ENCODE measurements at regions of chr7 and their contacts with region 1.

Region 1: GRCh38 chr7:1767524-1767923 is 97.4 kb downstream of the ELFN1 start:
- DNase-seq: no peak
- ATAC-seq: peak in 4 of 8 donors; percentile 28 to 41 (median 36)
- H3K4me3 ChIP-seq: no peak overlapping the region
- H3K27ac ChIP-seq: no peak overlapping the region
- H3K4me1 ChIP-seq: no peaks in the 10 kb centered on the region
- H3K27me3 ChIP-seq: peaks cover 0 to 2% (median 0%) of the 10 kb centered on the region in 7 donors
- CTCF ChIP-seq: peak in 6 of 9 donors; percentile 11 to 36 (median 28)

Region 2: DNA sequence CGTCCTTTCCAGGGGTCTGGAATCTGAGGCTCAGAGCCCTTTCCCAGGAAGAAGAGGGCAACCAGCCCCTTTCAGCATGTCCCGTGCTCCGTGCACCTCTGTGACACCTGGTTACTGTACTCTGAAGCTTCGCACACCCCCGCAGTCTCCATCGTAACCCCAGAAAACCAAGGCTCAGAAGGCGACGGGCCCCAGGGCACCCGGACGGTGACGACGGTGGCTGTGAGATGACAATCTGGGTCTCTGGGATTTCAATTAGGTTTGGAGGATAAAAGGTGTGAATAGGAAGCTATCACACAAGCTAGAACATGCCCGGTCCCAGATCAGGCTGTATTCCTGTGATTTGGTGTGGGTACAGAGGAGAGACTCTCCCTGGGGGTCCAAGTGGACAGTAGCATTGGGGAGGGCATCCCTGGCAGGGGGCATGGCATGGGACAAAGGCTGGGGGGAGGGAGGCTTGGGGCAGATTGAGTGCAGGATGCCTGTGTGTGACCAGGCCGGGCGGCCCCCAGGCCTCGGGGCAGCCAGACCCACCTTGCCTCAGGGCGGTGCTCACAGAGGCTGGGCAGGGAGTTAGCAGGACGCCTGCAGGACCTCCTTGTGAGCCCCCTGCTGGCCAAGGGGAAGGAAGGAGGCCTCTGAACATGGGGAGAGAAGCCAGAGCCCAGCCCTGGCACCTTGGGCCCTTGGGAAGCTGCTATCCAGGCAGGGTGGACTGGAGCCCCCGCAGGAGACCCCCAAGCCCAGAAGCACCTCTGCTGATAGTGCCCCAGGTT is 174.2 kb before region 1 on chr7:
- intact Hi-C with region 1: loop called in 3 of 10 experiments (anchors 10 kb)
- DNase-seq: no peak
- ATAC-seq: no peak
- H3K4me3 ChIP-seq: no peak overlapping the region
- H3K27ac ChIP-seq: no peak overlapping the region
- H3K4me1 ChIP-seq: peaks cover 0 to 10% (median 0%) of the 10 kb centered on the region in 9 donors
- H3K27me3 ChIP-seq: peaks cover 0 to 86% (median 53%) of the 10 kb centered on the region in 7 donors
- CTCF ChIP-seq: peak in 5 of 9 donors; percentile 7 to 35 (median 25)

Region 3: GRCh38 chr7:1693991-1694524 is 73.5 kb before region 1 on chr7:
- intact Hi-C with region 1: no loop called
- DNase-seq: no peak
- ATAC-seq: no peak
- H3K4me3 ChIP-seq: no peak overlapping the region
- H3K27ac ChIP-seq: no peak overlapping the region
- H3K4me1 ChIP-seq: peaks cover 0 to 29% (median 19%) of the 10 kb centered on the region in 9 donors
- H3K27me3 ChIP-seq: peaks cover 0 to 5% (median 0%) of the 10 kb centered on the region in 7 donors
- CTCF ChIP-seq: no peak